ENCODE measurements at regions of chr19 and their contacts with region 1.

Region 1: DNA sequence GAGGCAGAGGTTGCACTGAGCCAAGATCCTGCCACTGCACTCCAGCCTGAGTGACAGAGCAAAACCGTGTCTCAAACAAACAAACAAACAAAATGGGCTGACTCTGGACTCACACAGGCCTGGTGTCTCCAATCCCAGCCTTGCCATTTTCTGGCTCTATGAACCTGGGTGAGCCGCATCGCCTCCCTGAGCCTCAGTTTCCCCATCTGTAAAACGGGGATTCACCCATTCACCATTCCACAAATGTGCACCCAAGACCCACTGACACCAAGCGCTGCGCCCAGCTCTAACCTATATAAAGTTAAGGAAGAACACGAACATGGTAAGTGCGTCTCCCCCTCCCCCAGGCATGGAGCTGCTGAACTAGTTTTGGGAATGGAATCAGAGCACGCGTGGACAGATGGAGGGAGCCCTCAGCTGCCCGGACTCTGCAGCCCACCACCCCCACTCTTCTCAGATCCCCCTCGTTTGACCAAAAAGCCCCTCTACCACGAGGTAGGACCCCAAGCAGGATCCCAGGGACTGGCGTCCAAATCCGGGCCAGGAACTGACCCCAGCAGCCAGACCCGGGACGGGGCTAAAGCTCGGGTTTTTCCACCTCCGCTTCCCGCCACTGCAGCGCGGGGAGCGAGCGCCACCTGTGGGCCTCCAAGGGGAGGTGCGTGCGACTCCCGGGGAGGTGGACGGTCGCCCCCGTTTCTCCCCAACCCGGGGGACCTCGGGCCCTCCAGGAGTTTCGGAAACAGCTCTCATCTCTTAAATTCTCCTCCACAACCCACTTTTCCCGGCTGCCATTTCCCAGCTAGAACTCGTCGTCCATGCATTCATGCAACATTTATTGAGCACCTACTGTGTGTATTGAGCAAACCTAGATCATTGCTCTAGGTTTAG is 33.0 kb upstream of the ADGRE5 start:
- DNase-seq: peak; percentile 80
- ATAC-seq: peak; percentile 82
- H3K4me3 Mint-ChIP-seq: peak overlapping the region; percentile 45
- H3K27ac Mint-ChIP-seq: no peak overlapping the region
- H3K4me1 Mint-ChIP-seq: peaks cover under 1% of the 10 kb centered on the region
- H3K27me3 Mint-ChIP-seq: peaks cover 9% of the 10 kb centered on the region; the same call in 1 of the 2 replicates
- CTCF ChIP-seq: peak; percentile 93

Region 2: DNA sequence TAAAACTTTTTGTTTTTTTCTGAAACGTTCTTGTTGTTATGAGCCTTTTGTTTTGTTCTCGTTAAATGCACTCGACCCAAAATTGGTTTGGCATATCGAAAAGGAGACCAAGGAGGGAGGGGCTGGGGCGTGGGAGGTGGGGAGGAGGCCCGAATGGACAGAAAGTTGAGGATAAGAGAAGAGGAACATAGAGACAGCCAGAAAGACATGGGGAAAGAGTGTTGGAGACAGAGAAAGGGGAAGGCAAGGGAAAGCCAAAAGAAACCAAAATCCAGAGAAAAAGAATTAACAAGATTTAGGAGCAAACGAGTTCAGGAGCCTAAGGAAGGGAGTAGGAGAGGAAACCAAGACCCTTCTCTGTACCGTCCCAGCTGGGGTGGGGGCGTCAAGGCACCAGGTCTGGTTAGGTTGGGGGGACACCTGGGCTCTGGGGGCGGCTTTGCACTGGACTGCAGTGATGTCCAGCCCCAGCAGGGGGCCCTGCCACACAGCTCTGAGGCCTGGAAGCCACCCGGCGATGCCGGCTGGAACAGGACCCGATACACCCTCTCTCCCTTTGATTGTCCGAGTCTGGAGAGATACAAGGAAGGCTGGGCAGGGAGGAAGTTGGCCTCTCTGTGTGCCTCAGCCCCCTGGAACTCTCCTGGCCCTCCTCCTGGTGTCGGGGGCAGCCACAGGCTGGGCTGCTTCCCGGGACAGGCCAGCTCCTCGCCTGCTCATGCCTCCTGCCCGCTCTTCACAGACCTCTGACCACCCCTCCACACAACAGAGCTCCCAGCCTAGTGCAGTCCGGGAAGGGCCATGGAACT is 200.2 kb before region 1 on chr19:
- CTCF ChIA-PET with region 1: interaction called, 18 read pairs
- POLR2A ChIA-PET with region 1: no interaction called
- DNase-seq: peak; percentile 74
- ATAC-seq: peak; percentile 47
- H3K4me3 Mint-ChIP-seq: no peak overlapping the region
- H3K27ac Mint-ChIP-seq: peak overlapping the region; percentile 70
- H3K4me1 Mint-ChIP-seq: peaks cover 27% of the 10 kb centered on the region
- H3K27me3 Mint-ChIP-seq: no peaks in the 10 kb centered on the region; the same call in 1 of the 2 replicates
- CTCF ChIP-seq: no peak

Region 3: GRCh38 chr19:14198384-14199376 is 149.6 kb before region 1 on chr19:
- CTCF ChIA-PET with region 1: interaction called, 56 read pairs
- POLR2A ChIA-PET with region 1: no interaction called
- DNase-seq: peak; percentile 33
- ATAC-seq: no peak
- H3K4me3 Mint-ChIP-seq: no peak overlapping the region
- H3K27ac Mint-ChIP-seq: no peak overlapping the region
- H3K4me1 Mint-ChIP-seq: peaks cover 39% of the 10 kb centered on the region
- H3K27me3 Mint-ChIP-seq: no peaks in the 10 kb centered on the region
- CTCF ChIP-seq: no peak

Region 4: GRCh38 chr19:14265290-14266036 is 82.8 kb before region 1 on chr19:
- CTCF ChIA-PET with region 1: interaction called, 12 read pairs
- POLR2A ChIA-PET with region 1: no interaction called
- DNase-seq: peak; percentile 60
- ATAC-seq: peak; percentile 79
- H3K4me3 Mint-ChIP-seq: peak overlapping the region; percentile 69
- H3K27ac Mint-ChIP-seq: no peak overlapping the region
- H3K4me1 Mint-ChIP-seq: peaks cover 29% of the 10 kb centered on the region
- H3K27me3 Mint-ChIP-seq: peaks cover 15% of the 10 kb centered on the region
- CTCF ChIP-seq: no peak

Region 5: DNA sequence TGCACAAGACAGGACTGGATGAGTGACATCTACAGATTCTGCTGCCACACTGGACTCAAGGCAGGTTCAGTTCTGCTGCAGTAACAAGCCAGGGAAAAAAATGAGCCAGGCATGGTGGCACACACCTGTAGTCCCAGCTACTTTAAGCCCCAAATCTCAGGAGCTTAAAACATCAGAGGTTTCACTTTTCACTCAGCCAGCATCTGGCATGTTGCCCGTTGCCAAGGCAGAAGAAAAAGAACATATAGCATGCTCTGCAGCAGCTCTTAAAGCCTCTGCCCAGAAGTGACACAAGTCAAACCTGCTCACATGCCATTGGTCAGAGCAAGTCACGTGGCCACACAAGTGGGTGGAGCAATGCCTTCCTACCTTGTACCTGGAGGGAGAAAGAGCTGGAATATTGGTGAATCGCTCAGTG is 18.3 kb after region 1 on chr19:
- CTCF ChIA-PET with region 1: interaction called, 20 read pairs
- POLR2A ChIA-PET with region 1: interaction called, 3 read pairs
- DNase-seq: peak; percentile 89
- ATAC-seq: peak; percentile 65
- H3K4me3 Mint-ChIP-seq: no peak overlapping the region
- H3K27ac Mint-ChIP-seq: no peak overlapping the region
- H3K4me1 Mint-ChIP-seq: peaks cover 24% of the 10 kb centered on the region
- H3K27me3 Mint-ChIP-seq: no peaks in the 10 kb centered on the region; the same call in 1 of the 2 replicates
- CTCF ChIP-seq: no peak

Region 6: DNA sequence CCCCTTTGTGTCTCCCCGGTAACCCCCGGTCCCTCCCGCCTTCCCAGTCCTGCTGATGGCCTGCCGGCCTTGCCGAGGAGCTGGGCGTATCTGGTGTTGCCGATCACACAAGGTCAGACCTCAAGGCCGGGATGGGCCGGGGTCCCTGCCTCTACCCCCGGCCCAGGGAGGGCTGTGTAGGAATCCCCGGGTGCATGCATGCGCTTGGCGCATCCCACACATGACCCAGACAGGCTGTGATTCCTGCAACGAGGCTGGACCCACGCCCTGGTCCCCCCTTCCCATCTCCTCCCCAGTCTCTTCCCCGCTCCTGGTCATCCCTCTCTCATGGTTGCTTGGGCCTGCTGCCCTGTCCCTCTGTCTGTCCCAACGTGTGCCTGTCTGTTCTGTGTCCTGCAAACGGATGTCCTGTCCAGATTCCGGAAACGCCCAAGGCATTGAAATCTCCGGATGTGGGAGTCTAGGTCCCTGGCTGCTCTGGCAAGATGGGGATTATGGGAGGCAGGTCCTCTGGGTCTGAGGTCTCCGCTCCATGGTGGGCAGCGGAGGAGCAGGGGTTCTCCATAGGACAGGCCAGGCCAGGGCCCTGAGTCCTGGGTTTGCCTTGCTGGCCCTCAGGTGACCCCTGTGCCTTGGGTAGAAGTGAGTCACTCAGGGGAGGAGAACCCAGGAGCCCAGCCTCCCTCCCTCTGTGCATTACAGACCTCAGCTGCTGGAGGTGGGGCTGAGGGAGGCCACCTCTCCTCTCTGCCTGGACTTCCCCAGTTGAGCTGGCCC is 86.5 kb after region 1 on chr19:
- CTCF ChIA-PET with region 1: no interaction called
- POLR2A ChIA-PET with region 1: no interaction called
- DNase-seq: no peak
- ATAC-seq: no peak
- H3K4me3 Mint-ChIP-seq: peak overlapping the region; percentile 65
- H3K27ac Mint-ChIP-seq: peak overlapping the region; percentile 74
- H3K4me1 Mint-ChIP-seq: peaks cover 12% of the 10 kb centered on the region
- H3K27me3 Mint-ChIP-seq: peaks cover 23% of the 10 kb centered on the region
- CTCF ChIP-seq: no peak

Measured in WTC11 (cell line).